ENCODE measurements at regions of chr17 and their contacts with region 1.

Region 1: GRCh38 chr17:58517734-58518609 is 3.5 kb upstream of the MTMR4 start:
- DNase-seq: peak; percentile 100

Region 2: GRCh38 chr17:58352014-58352842 is 165.7 kb before region 1 on chr17 and contains the start of gene SUPT4H1:
- intact Hi-C with region 1: loop called (anchors 5 kb)
- DNase-seq: peak; percentile 95
- total RNA-seq, gene SUPT4H1: 49.4 TPM

Region 3: GRCh38 chr17:58631523-58632323 is 113.8 kb after region 1 on chr17:
- intact Hi-C with region 1: loop called (anchors 1 kb)
- DNase-seq: peak; percentile 96

Region 4: DNA sequence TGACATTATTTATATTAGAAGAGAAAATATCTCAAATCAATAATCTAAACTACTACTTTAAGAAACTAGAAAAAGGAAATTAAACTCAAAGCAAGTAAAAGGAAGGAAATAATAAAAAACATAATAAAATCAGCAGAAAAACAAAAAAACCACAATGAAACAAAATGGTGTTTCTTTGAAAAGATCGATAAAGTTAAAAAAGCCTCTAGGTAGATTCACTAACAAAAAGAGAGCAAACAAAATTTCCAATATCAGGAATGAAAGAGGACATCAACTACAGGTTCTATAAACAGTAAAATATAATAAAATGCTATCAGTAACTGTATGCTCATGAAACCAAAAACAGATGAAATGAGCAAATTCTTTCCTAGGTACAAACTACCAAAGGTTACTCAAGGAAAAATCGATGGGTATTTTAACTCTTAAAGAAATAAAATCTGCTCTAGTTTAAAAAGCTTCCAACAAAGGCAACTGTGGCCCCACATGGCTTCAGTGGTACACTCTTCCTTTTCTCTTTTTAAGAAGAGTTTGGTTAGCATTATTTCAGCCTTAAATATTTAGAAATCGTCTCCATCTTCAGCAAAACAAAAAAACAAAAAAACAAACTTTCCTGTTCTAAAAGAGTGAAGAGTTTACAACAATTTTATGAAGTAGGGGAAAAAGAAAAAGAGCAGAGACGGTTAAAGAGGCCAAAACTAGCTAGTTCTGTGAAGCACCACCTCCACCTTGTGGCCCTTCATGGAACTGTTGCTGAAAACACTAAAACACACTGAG is 486.6 kb after region 1 on chr17:
- intact Hi-C with region 1: loop called (anchors 2 kb)
- DNase-seq: no peak

Region 5: GRCh38 chr17:59707114-59707970 is 1189.4 kb after region 1 on chr17 and contains the starts of genes PTRH2 and VMP1:
- intact Hi-C with region 1: loop called (anchors 10 kb)
- DNase-seq: peak; percentile 99
- total RNA-seq, gene PTRH2: 9.7 TPM
- total RNA-seq, gene VMP1: 82.8 TPM